ENCODE measurements at regions of chr4 and their contacts with region 1.

Region 1: GRCh38 chr4:137655302-137655701 is 123.0 kb upstream of the PCDH18 start:
- DNase-seq: no peak
- ATAC-seq: no peak
- H3K4me3 ChIP-seq: no peak overlapping the region
- H3K27ac ChIP-seq: no peak overlapping the region
- H3K4me1 ChIP-seq: no peaks in the 10 kb centered on the region
- H3K27me3 ChIP-seq: no peaks in the 10 kb centered on the region
- CTCF ChIP-seq: no peak
- POLR2A ChIP-seq: no peak

Region 2: DNA sequence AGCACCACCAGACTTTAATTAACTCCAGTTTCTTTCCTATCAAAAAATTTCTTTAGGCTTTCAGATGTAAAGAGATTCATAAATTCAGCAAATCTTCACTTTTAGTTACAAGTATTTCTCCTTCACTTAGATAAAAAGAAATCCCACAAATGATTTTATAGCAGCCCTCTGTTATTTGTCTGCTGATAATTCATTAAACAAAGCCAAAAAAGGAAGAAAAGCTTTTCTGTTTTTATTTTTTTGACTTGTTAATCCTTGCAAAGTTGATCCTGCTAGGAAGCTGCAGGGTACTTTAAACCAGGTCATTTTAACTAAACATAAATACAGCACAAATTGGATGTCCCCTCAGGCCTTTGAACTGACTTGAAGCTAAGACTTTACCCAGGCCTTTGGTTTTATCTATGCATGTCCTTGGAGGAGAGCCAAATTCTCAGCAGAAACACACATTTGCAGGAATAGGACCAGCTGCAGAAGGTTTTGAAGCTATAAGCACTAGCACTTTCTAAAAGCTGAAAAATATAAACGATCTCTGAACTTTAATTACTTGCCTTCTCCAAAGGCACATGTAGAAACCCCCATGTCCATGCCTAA is 180.5 kb before region 1 on chr4:
- in situ Hi-C with region 1: no loop called
- intact Hi-C with region 1: no loop called
- DNase-seq: no peak
- ATAC-seq: no peak
- H3K4me3 ChIP-seq: no peak overlapping the region
- H3K27ac ChIP-seq: no peak overlapping the region
- H3K4me1 ChIP-seq: no peaks in the 10 kb centered on the region
- H3K27me3 ChIP-seq: no peaks in the 10 kb centered on the region
- CTCF ChIP-seq: no peak
- POLR2A ChIP-seq: no peak

Region 3: GRCh38 chr4:137678796-137679195 is 23.5 kb after region 1 on chr4:
- in situ Hi-C with region 1: no loop called
- intact Hi-C with region 1: no loop called
- DNase-seq: no peak
- ATAC-seq: no peak
- H3K4me3 ChIP-seq: no peak overlapping the region
- H3K27ac ChIP-seq: no peak overlapping the region
- H3K4me1 ChIP-seq: no peaks in the 10 kb centered on the region
- H3K27me3 ChIP-seq: no peaks in the 10 kb centered on the region
- CTCF ChIP-seq: no peak
- POLR2A ChIP-seq: no peak

Region 4: GRCh38 chr4:137722910-137723309 is 67.6 kb after region 1 on chr4:
- in situ Hi-C with region 1: no loop called
- intact Hi-C with region 1: loop called (anchors 2 kb)
- DNase-seq: no peak
- ATAC-seq: no peak
- H3K4me3 ChIP-seq: no peak overlapping the region
- H3K27ac ChIP-seq: no peak overlapping the region
- H3K4me1 ChIP-seq: no peaks in the 10 kb centered on the region
- H3K27me3 ChIP-seq: no peaks in the 10 kb centered on the region
- CTCF ChIP-seq: no peak
- POLR2A ChIP-seq: no peak